ENCODE measurements at regions of chrX and their contacts with region 1.

Region 1: DNA sequence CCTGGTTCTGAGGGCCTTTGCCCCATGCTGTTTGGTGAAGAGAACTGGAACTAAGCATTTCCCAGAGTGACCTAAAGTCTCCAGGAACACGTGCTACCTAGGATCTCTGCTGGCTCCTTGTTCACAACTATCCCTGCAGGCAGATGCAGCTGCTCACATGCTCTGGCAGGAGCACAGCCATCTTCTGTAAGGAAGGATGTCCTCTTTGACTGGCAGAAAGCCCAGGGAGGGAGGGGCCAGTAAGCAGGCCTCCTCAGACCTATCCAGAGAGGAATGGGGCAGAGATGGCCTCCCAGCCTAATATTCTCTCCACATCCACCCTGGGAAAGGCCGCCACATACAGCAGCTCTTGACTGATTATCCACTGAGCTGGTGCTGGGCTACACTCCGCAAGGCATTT is 142.8 kb upstream of the EOLA2 start:
- DNase-seq: no peak
- ATAC-seq: no peak
- H3K4me3 ChIP-seq: no peak overlapping the region
- H3K27ac ChIP-seq: no peak overlapping the region
- H3K4me1 ChIP-seq: no peaks in the 10 kb centered on the region
- H3K27me3 ChIP-seq: no peaks in the 10 kb centered on the region
- CTCF ChIP-seq: no peak

Region 2: DNA sequence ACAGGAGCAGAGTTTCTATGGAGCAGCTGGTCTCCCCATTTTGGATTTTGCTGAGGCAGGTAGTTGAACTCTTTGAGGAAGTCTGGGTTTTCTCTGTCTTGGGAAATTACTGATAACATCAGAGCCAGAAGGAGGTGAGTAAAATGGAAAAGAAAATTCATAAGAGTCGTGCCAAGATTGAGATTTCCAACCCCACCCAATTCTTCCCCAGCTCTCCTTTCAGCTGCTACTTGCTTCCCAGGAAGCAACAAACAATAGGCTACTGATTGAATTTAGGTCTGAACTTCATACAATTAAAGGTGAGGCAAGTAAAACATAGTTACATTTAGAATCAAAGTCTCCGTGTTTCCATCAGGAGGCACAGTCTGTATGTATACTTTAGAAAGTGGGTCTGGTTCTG is 88.2 kb before region 1 on chrX:
- intact Hi-C with region 1: no loop called
- DNase-seq: no peak
- ATAC-seq: no peak
- H3K4me3 ChIP-seq: no peak overlapping the region
- H3K27ac ChIP-seq: no peak overlapping the region
- H3K4me1 ChIP-seq: no peaks in the 10 kb centered on the region
- H3K27me3 ChIP-seq: no peaks in the 10 kb centered on the region
- CTCF ChIP-seq: no peak

Region 3: DNA sequence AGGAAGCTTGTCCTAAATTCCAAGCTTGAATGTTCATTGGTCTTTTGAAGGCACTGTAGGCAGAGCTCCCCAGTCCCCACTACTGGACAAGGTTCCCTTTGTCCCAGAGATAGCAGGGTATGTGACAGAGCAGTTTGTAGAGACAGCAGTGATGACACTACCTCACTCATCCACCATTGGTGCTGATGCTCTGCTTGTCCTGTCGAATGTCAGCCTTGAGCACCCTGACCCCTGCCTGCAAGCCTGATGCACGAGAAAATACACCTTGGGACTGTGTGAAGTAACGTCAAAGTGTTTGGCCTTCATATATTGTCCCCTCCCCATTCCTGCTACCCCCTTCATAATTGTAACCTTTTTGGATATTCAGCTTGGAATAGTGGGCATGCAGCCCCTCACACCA is 46.1 kb after region 1 on chrX:
- intact Hi-C with region 1: loop called in 1 of 2 experiments (anchors 2 kb)
- DNase-seq: no peak
- ATAC-seq: no peak
- H3K4me3 ChIP-seq: no peak overlapping the region
- H3K27ac ChIP-seq: no peak overlapping the region
- H3K4me1 ChIP-seq: no peaks in the 10 kb centered on the region
- H3K27me3 ChIP-seq: no peaks in the 10 kb centered on the region
- CTCF ChIP-seq: no peak

Region 4: GRCh38 chrX:150446151-150446550 is 365.1 kb after region 1 on chrX:
- intact Hi-C with region 1: no loop called
- DNase-seq: no peak
- ATAC-seq: no peak
- H3K4me3 ChIP-seq: no peak overlapping the region
- H3K27ac ChIP-seq: no peak overlapping the region
- H3K4me1 ChIP-seq: no peaks in the 10 kb centered on the region
- H3K27me3 ChIP-seq: no peaks in the 10 kb centered on the region
- CTCF ChIP-seq: no peak